Activated CD4-positive, alpha-beta memory T cell treated with anti-CD3 and anti-CD28 coated beads, Interleukin-2, amount 10 ng/mL, durations not matched to agents 7 days and 5 days (primary cell): ENCODE measurements at regions of chr12 and their contacts with region 1.

Region 1: DNA sequence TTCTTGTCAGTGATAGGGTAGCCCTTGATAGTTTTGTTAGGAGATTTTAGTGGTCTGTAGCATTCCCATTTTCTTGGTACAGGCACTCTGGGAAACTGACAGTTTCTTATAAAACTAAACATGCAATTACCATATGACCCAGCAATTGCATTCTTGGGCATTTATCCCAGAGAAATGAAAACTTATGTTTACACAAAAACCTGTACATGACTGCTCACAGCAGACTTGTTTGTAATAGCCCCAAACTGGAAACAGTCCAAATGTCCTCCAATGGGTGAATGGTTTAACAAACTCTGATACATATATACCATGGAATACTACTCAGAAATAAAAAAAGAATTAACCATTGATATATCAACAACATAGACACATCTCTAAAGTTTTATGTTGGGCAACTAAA is 75.5 kb downstream of the BORCS5 start:
- DNase-seq: no peak
- H3K4me3 Mint-ChIP-seq: peak overlapping the region; percentile 8
- H3K27ac Mint-ChIP-seq: peak overlapping the region; percentile 78
- H3K4me1 Mint-ChIP-seq: peaks cover 78% of the 10 kb centered on the region
- H3K27me3 Mint-ChIP-seq: no peaks in the 10 kb centered on the region

Region 2: GRCh38 chr12:12408265-12408690 is 24.1 kb before region 1 on chr12:
- CTCF ChIA-PET with region 1: no interaction called
- POLR2A ChIA-PET with region 1: no interaction called
- DNase-seq: no peak
- H3K4me3 Mint-ChIP-seq: no peak overlapping the region
- H3K27ac Mint-ChIP-seq: peak overlapping the region; percentile 69
- H3K4me1 Mint-ChIP-seq: peaks cover 60% of the 10 kb centered on the region
- H3K27me3 Mint-ChIP-seq: no peaks in the 10 kb centered on the region

Region 3: GRCh38 chr12:12442548-12443071 is 10.2 kb after region 1 on chr12:
- CTCF ChIA-PET with region 1: no interaction called
- POLR2A ChIA-PET with region 1: interaction called, 18 read pairs
- DNase-seq: no peak
- H3K4me3 Mint-ChIP-seq: peak overlapping the region; percentile 39
- H3K27ac Mint-ChIP-seq: peak overlapping the region; percentile 98
- H3K4me1 Mint-ChIP-seq: peaks cover 91% of the 10 kb centered on the region
- H3K27me3 Mint-ChIP-seq: no peaks in the 10 kb centered on the region